Mammary epithelial cell (primary cell): ENCODE measurements at regions of chr12 and their contacts with region 1.

Region 1: DNA sequence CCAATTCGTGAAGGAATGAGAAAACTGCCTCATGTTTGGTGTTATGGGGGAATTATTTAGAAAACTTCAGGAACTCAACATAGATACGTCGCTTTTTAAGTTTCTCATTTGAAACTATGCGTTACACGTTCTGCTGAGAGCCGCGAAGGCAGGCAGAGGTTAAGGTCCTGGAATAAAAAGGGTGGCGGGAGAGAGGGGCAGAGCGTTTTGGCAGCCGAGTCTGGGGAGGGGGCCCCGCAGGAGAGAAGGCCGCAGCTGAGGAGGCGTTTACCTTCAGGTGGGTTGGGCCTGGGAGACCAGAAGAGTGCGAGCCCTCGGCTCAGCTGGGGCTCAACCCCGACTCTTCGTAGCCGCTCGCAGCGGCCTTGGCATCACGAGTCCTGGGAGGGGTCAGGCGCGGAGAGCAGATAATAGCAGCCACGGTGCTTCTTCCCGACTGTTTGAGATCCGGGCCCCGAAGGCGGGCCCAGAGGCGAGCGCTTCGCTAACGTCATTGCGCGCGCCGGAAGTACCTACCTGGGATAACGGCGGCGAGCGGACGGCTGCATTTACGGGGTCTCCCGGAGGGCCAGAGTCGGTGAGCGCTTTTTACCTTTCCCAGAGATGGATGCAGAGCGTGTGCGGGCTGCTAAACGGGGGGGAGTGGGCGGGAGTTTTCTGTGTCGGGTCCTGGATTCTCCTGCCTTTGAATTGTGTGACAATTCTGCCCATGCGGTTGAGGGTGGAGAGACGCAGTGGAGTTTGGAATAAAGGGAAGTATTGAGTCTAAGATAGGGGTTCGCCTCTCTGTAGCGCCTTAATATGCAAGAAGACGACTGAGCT is at the starts of genes PPHLN1 and ZCRB1:
- DNase-seq: peak; percentile 83
- H3K4me3 ChIP-seq: peak within 1 kb of the TSS; percentile 64 to 88 (median 77)
- H3K27ac ChIP-seq: peak within 1 kb of the TSS; percentile 88
- H3K4me1 ChIP-seq: peaks cover 13% of the 10 kb centered on the region
- H3K27me3 ChIP-seq: no peaks in the 10 kb centered on the region
- CTCF ChIP-seq: no peak
- total RNA-seq, gene PPHLN1: 64.2 to 74.3 TPM
- total RNA-seq, gene ZCRB1: 24.5 to 49.0 TPM

Region 2: DNA sequence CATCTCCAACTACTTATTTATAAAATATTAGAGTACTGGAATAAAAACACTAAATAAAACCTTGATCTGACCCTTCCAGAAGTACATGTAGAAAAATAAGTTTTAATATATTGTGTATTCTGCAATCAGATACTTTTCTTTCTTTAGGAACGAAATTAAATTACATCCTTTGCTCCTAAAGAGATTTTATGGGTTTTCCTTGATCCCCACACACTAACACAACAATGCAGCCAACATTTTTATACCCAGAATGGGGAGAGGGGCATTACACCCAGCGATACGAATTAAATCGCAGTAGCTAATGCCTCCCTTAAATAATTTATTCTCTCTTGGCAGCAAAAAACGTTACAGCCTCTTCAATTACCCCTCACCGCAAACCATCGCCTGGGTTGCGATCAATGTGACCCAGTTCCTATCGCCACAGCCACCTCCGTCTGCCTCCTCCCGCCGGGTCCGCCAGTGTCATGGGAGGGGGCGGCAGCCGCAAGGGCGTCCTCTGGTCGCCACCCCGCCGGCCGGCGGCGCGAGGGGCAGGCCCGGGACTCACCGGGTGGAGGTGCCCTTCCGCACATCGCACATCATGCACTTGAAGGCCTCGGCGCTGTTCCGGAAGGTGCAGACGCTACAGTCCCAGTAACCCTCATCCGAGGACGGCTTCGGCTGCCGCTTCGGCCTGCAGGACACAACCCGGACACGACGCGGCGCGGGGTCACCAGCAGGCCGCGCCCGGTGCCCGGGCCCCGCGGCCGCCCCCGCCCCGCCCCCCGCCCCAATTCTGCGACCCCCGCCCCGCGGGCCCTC is 88.6 kb before region 1 on chr12:
- CTCF ChIA-PET with region 1: no interaction called
- dilution Hi-C with region 1: loop called (anchors 5 kb)
- in situ Hi-C with region 1: no loop called
- intact Hi-C with region 1: loop called (anchors 2 kb)
- DNase-seq: peak; percentile 73
- H3K4me3 ChIP-seq: peak overlapping the region; percentile 67 to 82 (median 77)
- H3K27ac ChIP-seq: peak overlapping the region; percentile 56
- H3K4me1 ChIP-seq: peaks cover 8% of the 10 kb centered on the region
- H3K27me3 ChIP-seq: no peaks in the 10 kb centered on the region
- CTCF ChIP-seq: peak; percentile 34 to 65